ENCODE measurements at regions of chr2 and their contacts with region 1.

Region 1: GRCh38 chr2:143399631-143400057 is 270.4 kb downstream of the ARHGAP15 start:
- DNase-seq: no peak
- ATAC-seq: no peak
- H3K4me3 ChIP-seq: no peak overlapping the region
- H3K4me3 Mint-ChIP-seq: no peak overlapping the region
- H3K27ac ChIP-seq: no peak overlapping the region
- H3K27ac Mint-ChIP-seq: peak overlapping the region in 1 of 9 donors; percentile 72
- H3K4me1 ChIP-seq: no peaks in the 10 kb centered on the region
- H3K4me1 Mint-ChIP-seq: peaks cover 16 to 83% (median 63%) of the 10 kb centered on the region in 7 donors
- H3K27me3 ChIP-seq: no peaks in the 10 kb centered on the region
- H3K27me3 Mint-ChIP-seq: no peaks in the 10 kb centered on the region

Region 2: GRCh38 chr2:142603759-142604158 is 795.9 kb before region 1 on chr2:
- CTCF ChIA-PET with region 1: no interaction called
- POLR2A ChIA-PET with region 1: no interaction called
- intact Hi-C with region 1: no loop called
- DNase-seq: no peak
- ATAC-seq: no peak
- H3K4me3 ChIP-seq: no peak overlapping the region
- H3K4me3 Mint-ChIP-seq: no peak overlapping the region
- H3K27ac ChIP-seq: no peak overlapping the region
- H3K27ac Mint-ChIP-seq: no peak overlapping the region
- H3K4me1 ChIP-seq: no peaks in the 10 kb centered on the region
- H3K4me1 Mint-ChIP-seq: no peaks in the 10 kb centered on the region
- H3K27me3 ChIP-seq: no peaks in the 10 kb centered on the region
- H3K27me3 Mint-ChIP-seq: no peaks in the 10 kb centered on the region

Region 3: DNA sequence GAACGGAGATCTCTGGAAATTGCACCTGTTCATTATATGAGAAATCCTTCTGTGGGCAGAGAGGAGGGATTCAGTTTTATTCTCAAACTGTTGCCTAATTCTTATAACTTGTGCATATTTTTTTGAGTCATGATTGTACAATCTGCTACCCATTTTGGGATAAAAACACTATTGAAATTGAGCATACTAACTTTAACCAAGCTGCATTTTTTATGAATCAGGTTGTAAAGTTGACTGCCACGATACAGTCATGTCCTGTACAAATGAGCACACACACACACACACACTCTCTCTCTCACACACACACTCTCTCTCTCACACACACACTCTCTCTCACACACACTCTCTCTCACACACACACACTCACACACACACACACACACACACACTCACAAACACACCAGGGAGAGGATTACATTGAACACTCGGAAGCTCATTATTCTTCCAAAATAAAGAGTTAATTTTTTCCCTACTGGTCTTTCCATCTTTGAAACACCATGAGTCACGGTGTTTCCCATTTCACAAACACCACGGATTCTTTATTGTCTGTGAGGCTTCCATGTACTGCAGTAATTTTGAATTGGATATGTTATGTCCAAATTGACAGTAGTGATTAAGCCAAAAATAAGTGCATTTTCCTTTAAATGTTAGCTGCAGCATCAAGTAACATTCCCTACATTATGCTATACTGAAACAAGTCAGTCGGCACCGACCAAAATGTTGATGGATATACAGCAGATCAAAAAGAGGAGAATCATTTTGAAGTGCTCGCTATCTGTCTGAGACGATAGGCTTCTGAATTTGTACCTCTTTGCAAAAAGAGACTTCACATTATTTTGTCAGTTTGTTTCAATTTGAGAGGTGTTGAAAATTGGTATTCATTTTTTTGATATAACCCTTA is 53.5 kb before region 1 on chr2:
- CTCF ChIA-PET with region 1: no interaction called
- POLR2A ChIA-PET with region 1: no interaction called
- intact Hi-C with region 1: no loop called
- DNase-seq: no peak
- ATAC-seq: no peak
- H3K4me3 ChIP-seq: no peak overlapping the region
- H3K4me3 Mint-ChIP-seq: peak overlapping the region in 1 of 10 donors; percentile 18
- H3K27ac ChIP-seq: no peak overlapping the region
- H3K27ac Mint-ChIP-seq: peak overlapping the region in 3 of 9 donors; percentile 3 to 46 (median 25)
- H3K4me1 ChIP-seq: no peaks in the 10 kb centered on the region
- H3K4me1 Mint-ChIP-seq: peaks cover 4 to 65% (median 43%) of the 10 kb centered on the region in 7 donors
- H3K27me3 ChIP-seq: no peaks in the 10 kb centered on the region
- H3K27me3 Mint-ChIP-seq: no peaks in the 10 kb centered on the region

Region 4: DNA sequence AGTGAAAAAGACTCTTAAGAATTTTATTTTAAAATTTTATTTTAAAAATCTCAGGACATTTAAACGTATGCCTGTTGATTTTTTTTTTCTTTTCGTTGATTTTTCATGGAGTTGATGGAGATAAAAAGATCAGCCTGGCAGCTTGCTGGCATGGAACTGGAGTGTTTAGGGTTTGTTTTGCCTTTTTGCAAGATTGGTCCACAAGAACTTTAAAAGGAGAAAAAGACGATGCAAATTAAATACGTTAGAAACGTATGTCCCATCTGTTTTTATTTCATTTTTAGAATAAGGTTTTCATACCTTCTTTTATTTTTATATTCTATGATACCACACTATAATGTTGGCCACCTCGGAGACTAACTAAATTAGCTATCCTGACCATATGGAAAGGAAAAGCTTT is 15.5 kb before region 1 on chr2:
- CTCF ChIA-PET with region 1: no interaction called
- POLR2A ChIA-PET with region 1: interaction called, 3 read pairs
- intact Hi-C with region 1: loop called in 1 of 2 experiments (anchors 2 kb)
- DNase-seq: no peak
- ATAC-seq: no peak
- H3K4me3 ChIP-seq: no peak overlapping the region
- H3K4me3 Mint-ChIP-seq: no peak overlapping the region
- H3K27ac ChIP-seq: no peak overlapping the region
- H3K27ac Mint-ChIP-seq: peak overlapping the region in 1 of 9 donors; percentile 56
- H3K4me1 ChIP-seq: peaks cover 0 to 4% of the 10 kb centered on the region in 2 donors
- H3K4me1 Mint-ChIP-seq: peaks cover 12 to 51% (median 34%) of the 10 kb centered on the region in 7 donors
- H3K27me3 ChIP-seq: no peaks in the 10 kb centered on the region
- H3K27me3 Mint-ChIP-seq: no peaks in the 10 kb centered on the region

Region 5: DNA sequence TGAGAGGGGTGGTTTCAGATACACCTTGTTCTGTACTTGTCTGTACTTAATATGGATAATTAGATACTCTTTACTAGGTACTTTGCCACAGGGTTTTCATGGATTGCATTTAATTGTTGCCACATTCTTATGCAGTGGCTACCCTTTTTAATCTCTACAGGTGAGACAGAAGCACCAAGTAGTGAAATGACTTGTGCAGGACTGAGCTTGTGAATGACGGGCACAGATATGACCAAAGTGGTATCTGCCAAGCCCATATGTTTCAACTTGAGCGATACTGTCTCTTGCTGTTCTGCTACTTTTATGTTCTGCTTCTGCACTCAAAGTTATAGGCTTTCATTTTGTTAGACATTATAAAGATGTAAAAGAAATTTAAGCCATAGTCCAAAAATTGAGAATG is 17.8 kb after region 1 on chr2:
- CTCF ChIA-PET with region 1: no interaction called
- POLR2A ChIA-PET with region 1: interaction called, 3 read pairs
- intact Hi-C with region 1: loop called in 1 of 2 experiments (anchors 2 kb)
- DNase-seq: no peak
- ATAC-seq: no peak
- H3K4me3 ChIP-seq: no peak overlapping the region
- H3K4me3 Mint-ChIP-seq: no peak overlapping the region
- H3K27ac ChIP-seq: no peak overlapping the region
- H3K27ac Mint-ChIP-seq: no peak overlapping the region
- H3K4me1 ChIP-seq: peaks cover 0 to 3% of the 10 kb centered on the region in 2 donors
- H3K4me1 Mint-ChIP-seq: peaks cover 30 to 70% (median 53%) of the 10 kb centered on the region in 7 donors
- H3K27me3 ChIP-seq: no peaks in the 10 kb centered on the region
- H3K27me3 Mint-ChIP-seq: no peaks in the 10 kb centered on the region

Region 6: DNA sequence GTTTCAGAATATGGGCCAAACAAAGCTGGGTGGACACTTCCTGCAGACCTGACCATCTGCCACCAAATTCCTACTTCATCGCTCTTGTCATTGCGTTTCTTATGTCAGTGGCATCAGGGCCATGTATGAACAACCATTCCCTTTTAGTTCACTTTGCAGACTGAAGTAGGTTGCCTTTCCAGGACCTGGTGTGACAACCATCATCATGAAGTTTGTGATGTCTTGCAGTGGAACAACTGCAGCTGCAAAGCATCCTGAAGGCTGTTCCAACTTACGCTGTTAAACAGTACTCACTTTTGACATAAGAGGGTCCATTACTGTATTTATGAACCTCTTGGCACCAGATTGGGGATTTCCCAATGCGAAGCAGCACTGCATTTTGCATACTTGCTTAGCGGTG is 241.2 kb after region 1 on chr2:
- CTCF ChIA-PET with region 1: no interaction called
- POLR2A ChIA-PET with region 1: no interaction called
- intact Hi-C with region 1: no loop called
- DNase-seq: no peak
- ATAC-seq: no peak
- H3K4me3 ChIP-seq: no peak overlapping the region
- H3K4me3 Mint-ChIP-seq: no peak overlapping the region
- H3K27ac ChIP-seq: no peak overlapping the region
- H3K27ac Mint-ChIP-seq: no peak overlapping the region
- H3K4me1 ChIP-seq: no peaks in the 10 kb centered on the region
- H3K4me1 Mint-ChIP-seq: peaks cover 3 to 39% (median 19%) of the 10 kb centered on the region in 7 donors
- H3K27me3 ChIP-seq: no peaks in the 10 kb centered on the region
- H3K27me3 Mint-ChIP-seq: no peaks in the 10 kb centered on the region

Region 7: GRCh38 chr2:143877876-143878530 is 478.4 kb after region 1 on chr2:
- CTCF ChIA-PET with region 1: no interaction called
- POLR2A ChIA-PET with region 1: no interaction called
- intact Hi-C with region 1: no loop called
- DNase-seq: no peak
- ATAC-seq: no peak
- H3K4me3 ChIP-seq: no peak overlapping the region
- H3K4me3 Mint-ChIP-seq: no peak overlapping the region
- H3K27ac ChIP-seq: no peak overlapping the region
- H3K27ac Mint-ChIP-seq: no peak overlapping the region
- H3K4me1 ChIP-seq: no peaks in the 10 kb centered on the region
- H3K4me1 Mint-ChIP-seq: no peaks in the 10 kb centered on the region
- H3K27me3 ChIP-seq: no peaks in the 10 kb centered on the region
- H3K27me3 Mint-ChIP-seq: peaks cover 0 to 9% (median under 1%) of the 10 kb centered on the region in 5 donors